ENCODE measurements at regions of chr10 and their contacts with region 1.

Region 1: DNA sequence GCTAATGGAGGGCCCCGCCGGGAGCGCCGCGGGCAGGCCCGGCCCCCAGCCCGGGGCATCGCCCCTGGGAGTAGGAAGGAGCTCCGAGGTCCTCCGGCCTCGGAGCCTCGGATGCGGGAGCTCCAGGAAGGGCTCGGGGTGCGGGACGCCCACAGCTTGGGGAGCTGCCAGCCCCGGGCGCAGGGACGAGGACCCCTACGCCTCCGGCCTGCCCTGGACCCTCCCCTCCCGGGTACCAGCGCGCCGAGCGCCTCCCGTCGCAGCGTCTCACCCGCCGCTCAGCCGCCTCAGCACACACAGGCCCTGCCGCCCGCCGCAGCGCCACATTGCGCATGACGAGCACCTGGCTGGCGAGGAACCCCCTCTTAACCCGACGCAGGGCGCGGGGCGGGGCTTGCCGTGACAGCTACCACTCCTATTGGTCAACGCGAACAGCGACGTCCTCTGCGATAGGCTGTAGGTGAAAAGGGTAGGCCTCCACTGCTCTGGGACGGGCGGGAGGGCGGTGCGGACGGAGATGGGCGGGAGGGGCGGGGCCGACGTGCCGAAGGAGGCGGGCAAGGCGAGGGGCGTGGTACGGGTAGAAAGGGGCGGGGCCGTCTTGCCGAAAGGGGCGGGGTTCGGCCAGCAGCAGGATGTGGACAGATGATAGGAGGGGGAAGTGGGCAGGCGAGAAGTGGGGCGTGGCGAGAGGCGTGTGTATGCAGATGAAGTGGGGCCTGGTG is at the start of gene PITRM1:
- DNase-seq: peak; percentile 99
- H3K4me3 ChIP-seq: peak within 1 kb of the TSS; percentile 75
- H3K27ac ChIP-seq: peak within 1 kb of the TSS; percentile 71
- H3K4me1 ChIP-seq: no peaks in the 10 kb centered on the region
- H3K27me3 ChIP-seq: peaks cover 7% of the 10 kb centered on the region
- CTCF ChIP-seq: no peak
- total RNA-seq, gene PITRM1: 80.1 and 83.5 TPM in 2 replicates

Region 2: DNA sequence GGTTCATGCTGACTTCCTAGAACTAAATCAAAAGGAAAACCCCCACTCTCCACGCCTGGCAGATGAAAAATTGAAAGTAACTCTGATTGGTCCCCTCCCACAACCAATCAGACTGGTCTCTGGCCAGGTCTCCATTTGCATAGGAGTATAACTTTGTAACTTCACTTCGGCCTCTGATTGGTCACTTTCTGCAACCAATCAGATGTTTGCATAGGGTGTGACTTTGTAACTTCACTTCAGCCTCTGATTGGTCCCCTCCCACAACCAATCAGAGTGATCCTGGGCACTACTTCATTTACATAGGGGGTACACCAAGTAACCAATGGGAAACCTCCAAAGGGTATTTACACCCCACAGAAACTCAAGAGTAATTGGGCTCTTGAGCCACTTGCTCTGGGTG is 411.9 kb before region 1 on chr10:
- CTCF ChIA-PET with region 1: no interaction called
- POLR2A ChIA-PET with region 1: no interaction called
- intact Hi-C with region 1: no loop called
- DNase-seq: peak; percentile 32
- H3K4me3 ChIP-seq: no peak overlapping the region
- H3K27ac ChIP-seq: no peak overlapping the region
- H3K4me1 ChIP-seq: no peaks in the 10 kb centered on the region
- H3K27me3 ChIP-seq: peaks cover 91% of the 10 kb centered on the region
- CTCF ChIP-seq: no peak

Region 3: GRCh38 chr10:3226960-3227744 is 54.5 kb after region 1 on chr10:
- CTCF ChIA-PET with region 1: no interaction called
- POLR2A ChIA-PET with region 1: no interaction called
- intact Hi-C with region 1: no loop called
- DNase-seq: no peak
- H3K4me3 ChIP-seq: no peak overlapping the region
- H3K27ac ChIP-seq: no peak overlapping the region
- H3K4me1 ChIP-seq: peaks cover 9% of the 10 kb centered on the region
- H3K27me3 ChIP-seq: no peaks in the 10 kb centered on the region
- CTCF ChIP-seq: no peak

Region 4: DNA sequence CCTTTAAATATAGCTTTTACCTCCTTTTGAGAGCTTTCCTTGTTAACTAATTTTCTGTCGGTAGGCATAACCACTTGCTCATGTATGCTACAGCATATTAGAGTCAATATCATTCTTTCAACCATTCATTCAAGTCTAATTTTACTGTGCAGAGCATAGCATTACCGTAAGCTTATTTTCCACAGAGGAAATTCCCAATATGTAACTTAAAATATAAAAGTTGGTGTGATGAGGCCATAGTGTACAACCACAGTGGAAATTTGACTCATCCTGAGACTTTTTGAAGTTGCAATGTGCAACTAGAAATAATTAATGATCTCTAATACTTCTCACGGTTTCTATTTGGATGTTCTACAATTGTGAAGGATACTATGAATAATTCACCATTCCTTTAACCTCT is 693.0 kb after region 1 on chr10:
- CTCF ChIA-PET with region 1: interaction called, 11 read pairs
- POLR2A ChIA-PET with region 1: no interaction called
- intact Hi-C with region 1: no loop called
- DNase-seq: no peak
- H3K4me3 ChIP-seq: no peak overlapping the region
- H3K27ac ChIP-seq: no peak overlapping the region
- H3K4me1 ChIP-seq: no peaks in the 10 kb centered on the region
- H3K27me3 ChIP-seq: no peaks in the 10 kb centered on the region
- CTCF ChIP-seq: no peak